K562 (cell line): ENCODE measurements at regions of chr1 and their contacts with region 1.

Region 1: GRCh38 chr1:113928941-113929749 is at the start of gene HIPK1:
- DNase-seq: peak; percentile 92 to 97 (median 93)
- ATAC-seq: peak; percentile 76
- H3K4me3 ChIP-seq: peak within 1 kb of the TSS; percentile 70
- H3K27ac ChIP-seq: peak within 1 kb of the TSS; percentile 96
- H3K4me1 ChIP-seq: peaks cover 15 to 34% of the 10 kb centered on the region in 2 experiments
- H3K27me3 ChIP-seq: no peaks in the 10 kb centered on the region
- CTCF ChIP-seq: no peak
- EP300 ChIP-seq: no peak; the same call in 1 of the 2 replicates
- POLR2A ChIP-seq: peak; percentile 85
- RAD21 ChIP-seq: peak; percentile 3 to 10; a peak in 1 of 4 replicates
- polyA plus RNA-seq, gene HIPK1: 10.0 to 10.9 TPM

Region 2: DNA sequence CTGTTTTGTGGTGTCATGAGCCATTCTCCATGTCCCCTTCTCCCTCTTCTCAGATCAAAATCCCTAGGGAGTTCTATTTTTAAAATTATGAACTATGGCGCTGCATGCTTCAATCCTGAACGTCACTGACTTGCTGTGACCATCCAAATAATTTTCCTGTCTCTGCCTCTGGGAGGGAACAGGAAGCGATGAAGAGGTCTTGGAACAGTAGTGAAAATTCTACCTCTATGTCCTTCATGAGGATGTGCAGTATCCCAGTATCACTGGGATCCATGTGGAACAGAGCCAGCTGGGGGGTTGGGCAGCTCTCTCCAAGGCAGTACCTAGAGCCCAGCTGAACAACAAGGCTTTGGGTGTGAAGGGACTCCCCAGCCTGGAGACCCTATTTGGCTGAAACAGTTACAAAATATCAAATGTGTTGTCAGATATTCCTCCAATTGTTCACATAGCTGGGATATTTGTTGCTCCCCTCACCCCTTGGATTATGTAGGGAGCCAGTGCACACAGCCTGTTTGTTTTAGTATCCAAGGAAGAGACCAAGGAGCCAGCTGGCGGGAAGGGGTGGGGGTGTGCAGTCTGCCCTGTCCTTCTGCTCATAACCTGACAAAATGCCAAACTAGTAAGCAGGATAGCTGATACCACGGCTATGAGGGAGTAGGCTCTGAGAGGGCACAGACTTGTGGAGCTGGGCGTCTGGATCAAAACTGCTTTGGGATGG is 16.4 kb before region 1 on chr1:
- CTCF ChIA-PET with region 1: no interaction called
- POLR2A ChIA-PET with region 1: interaction called, 64 read pairs
- in situ Hi-C with region 1: no loop called
- intact Hi-C with region 1: loop called (anchors 2 kb)
- DNase-seq: peak in 2 of 4 experiments; percentile 23 to 33
- ATAC-seq: peak; percentile 14; the same call in 2 of the 3 replicates
- H3K4me3 ChIP-seq: no peak overlapping the region
- H3K27ac ChIP-seq: peak overlapping the region; percentile 30
- H3K4me1 ChIP-seq: peaks cover 25 to 43% of the 10 kb centered on the region in 2 experiments; a peak in 4 of 5 replicates
- H3K27me3 ChIP-seq: no peaks in the 10 kb centered on the region
- CTCF ChIP-seq: no peak
- EP300 ChIP-seq: no peak
- POLR2A ChIP-seq: no peak
- RAD21 ChIP-seq: no peak

Region 3: GRCh38 chr1:113940365-113941244 is 11.5 kb after region 1 on chr1:
- CTCF ChIA-PET with region 1: no interaction called
- POLR2A ChIA-PET with region 1: interaction called, 65 read pairs
- in situ Hi-C with region 1: no loop called
- intact Hi-C with region 1: no loop called
- DNase-seq: no peak
- ATAC-seq: no peak; the same call in 2 of the 3 replicates
- H3K4me3 ChIP-seq: no peak overlapping the region
- H3K27ac ChIP-seq: no peak overlapping the region
- H3K4me1 ChIP-seq: peaks cover 9 to 10% of the 10 kb centered on the region in 2 experiments; a peak in 3 of 5 replicates
- H3K27me3 ChIP-seq: no peaks in the 10 kb centered on the region
- CTCF ChIP-seq: no peak
- EP300 ChIP-seq: no peak
- POLR2A ChIP-seq: no peak
- RAD21 ChIP-seq: no peak

Region 4: DNA sequence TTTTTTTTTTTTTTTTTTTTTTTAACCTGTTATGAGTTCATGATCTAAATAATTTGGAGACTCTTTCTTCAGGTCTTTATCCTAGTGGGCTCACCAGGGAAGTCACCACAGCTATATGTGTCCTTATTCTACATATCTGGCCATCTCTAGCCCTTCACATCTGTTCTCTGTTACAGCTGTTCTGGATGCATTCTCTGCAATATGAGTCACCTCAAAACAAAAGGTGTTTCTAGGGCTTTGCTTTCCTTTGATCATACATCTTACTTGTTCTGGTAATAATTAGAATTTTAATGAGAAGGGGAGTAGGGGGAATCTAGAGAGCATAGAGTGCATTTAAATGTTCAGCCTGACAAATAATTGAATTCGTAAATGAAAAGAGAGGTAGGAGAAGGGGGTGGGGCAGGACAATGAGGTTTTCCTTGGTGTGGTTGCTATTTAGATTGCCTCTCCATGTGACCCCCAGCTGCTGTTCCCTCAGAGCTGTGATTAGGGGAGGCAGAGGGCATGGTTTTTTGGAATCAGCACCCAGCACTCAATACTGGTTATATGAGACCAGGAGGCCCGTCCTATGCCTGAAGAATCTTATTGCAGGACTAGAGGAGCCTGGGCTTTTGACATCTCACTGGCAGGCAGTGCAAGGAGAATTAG is 216.5 kb after region 1 on chr1:
- CTCF ChIA-PET with region 1: no interaction called
- POLR2A ChIA-PET with region 1: no interaction called
- in situ Hi-C with region 1: no loop called
- intact Hi-C with region 1: no loop called
- DNase-seq: no peak
- ATAC-seq: no peak
- H3K4me3 ChIP-seq: no peak overlapping the region
- H3K27ac ChIP-seq: no peak overlapping the region
- H3K4me1 ChIP-seq: no peaks in the 10 kb centered on the region
- H3K27me3 ChIP-seq: no peaks in the 10 kb centered on the region
- CTCF ChIP-seq: no peak
- EP300 ChIP-seq: no peak
- POLR2A ChIP-seq: no peak
- RAD21 ChIP-seq: no peak